PC-3 (cell line): ENCODE measurements at regions of chr10 and their contacts with region 1.

Region 1: GRCh38 chr10:70815504-70816219 is at the start of gene SGPL1:
- DNase-seq: peak; percentile 98
- ATAC-seq: peak; percentile 63
- H3K4me3 ChIP-seq: peak within 1 kb of the TSS; percentile 89
- H3K27ac ChIP-seq: peak within 1 kb of the TSS; percentile 82
- H3K4me1 ChIP-seq: peaks cover 21% of the 10 kb centered on the region
- H3K27me3 ChIP-seq: no peaks in the 10 kb centered on the region
- CTCF ChIP-seq: peak; percentile 98
- total RNA-seq, gene SGPL1: 77.6 and 101 TPM in 2 replicates

Region 2: GRCh38 chr10:70549962-70550458 is 265.7 kb before region 1 on chr10:
- CTCF ChIA-PET with region 1: no interaction called
- POLR2A ChIA-PET with region 1: no interaction called
- intact Hi-C with region 1: loop called (anchors 1 kb)
- DNase-seq: peak; percentile 91
- ATAC-seq: peak; percentile 95
- H3K4me3 ChIP-seq: no peak overlapping the region
- H3K27ac ChIP-seq: no peak overlapping the region
- H3K4me1 ChIP-seq: no peaks in the 10 kb centered on the region
- H3K27me3 ChIP-seq: no peaks in the 10 kb centered on the region
- CTCF ChIP-seq: peak; percentile 99

Region 3: GRCh38 chr10:70827086-70827757 is 11.6 kb after region 1 on chr10:
- CTCF ChIA-PET with region 1: interaction called, 4 read pairs
- POLR2A ChIA-PET with region 1: no interaction called
- intact Hi-C with region 1: loop called (anchors 1 kb)
- DNase-seq: peak; percentile 96
- ATAC-seq: peak; percentile 70
- H3K4me3 ChIP-seq: peak overlapping the region; percentile 29
- H3K27ac ChIP-seq: peak overlapping the region; percentile 84
- H3K4me1 ChIP-seq: peaks cover 67% of the 10 kb centered on the region
- H3K27me3 ChIP-seq: no peaks in the 10 kb centered on the region
- CTCF ChIP-seq: no peak

Region 4: DNA sequence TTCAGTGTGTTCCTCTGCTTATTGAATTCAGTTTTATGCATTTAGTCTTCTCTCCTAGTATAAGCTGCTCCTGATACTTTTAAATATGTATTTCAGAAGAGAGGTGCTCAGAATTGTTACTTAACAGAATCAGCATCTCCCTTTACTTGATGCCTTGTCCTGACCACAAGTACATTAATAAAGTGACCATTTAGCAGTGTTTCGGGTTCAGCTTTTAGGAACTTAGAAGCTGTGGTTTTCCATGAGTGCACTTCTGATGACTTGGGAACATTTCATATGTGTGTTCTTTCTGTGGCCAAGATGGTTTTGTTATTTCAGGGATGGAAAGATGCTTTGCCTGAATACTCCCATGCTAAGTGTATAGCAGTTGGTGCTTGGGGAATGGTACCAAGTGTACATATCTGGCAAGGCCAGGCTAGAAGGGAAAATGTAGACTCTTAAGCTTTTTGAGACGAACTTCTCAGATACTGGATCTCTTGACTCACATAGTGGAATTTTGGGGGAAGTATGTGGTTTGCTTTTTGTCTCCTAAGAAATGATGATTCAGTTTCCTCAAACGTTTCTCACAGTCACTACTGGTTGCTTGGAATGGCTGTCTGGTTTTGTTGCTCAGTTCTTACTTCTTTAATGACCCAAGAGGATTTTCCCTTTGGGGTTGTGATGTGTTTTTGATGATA is 17.3 kb after region 1 on chr10:
- CTCF ChIA-PET with region 1: interaction called, 3 read pairs
- POLR2A ChIA-PET with region 1: no interaction called
- intact Hi-C with region 1: loop called (anchors 2 kb)
- DNase-seq: peak; percentile 97
- ATAC-seq: peak; percentile 71
- H3K4me3 ChIP-seq: peak overlapping the region; percentile 17; the same call in 1 of the 2 replicates
- H3K27ac ChIP-seq: peak overlapping the region; percentile 84
- H3K4me1 ChIP-seq: peaks cover 65% of the 10 kb centered on the region
- H3K27me3 ChIP-seq: no peaks in the 10 kb centered on the region
- CTCF ChIP-seq: no peak

Region 5: DNA sequence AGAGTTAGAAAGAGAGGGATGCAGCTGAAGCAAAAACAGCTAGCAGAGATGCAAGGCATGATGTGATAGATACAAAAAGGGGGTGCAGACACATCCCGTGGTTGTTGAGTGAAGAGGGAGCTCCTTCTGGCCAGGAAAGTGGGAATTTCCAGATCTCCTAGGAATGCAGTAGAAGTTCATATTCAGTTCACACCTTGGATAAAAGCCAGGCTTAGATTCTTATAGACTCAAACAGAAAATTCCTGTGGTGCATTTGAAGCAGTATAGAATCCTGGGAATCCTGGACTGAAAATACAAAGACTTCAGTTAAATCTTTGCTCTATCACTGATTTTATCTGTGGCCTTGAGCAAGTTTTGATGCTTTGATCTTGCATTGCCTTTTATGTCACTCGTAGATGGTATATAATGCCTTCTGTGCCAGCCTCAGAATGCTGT is 33.9 kb after region 1 on chr10:
- CTCF ChIA-PET with region 1: interaction called, 13 read pairs
- POLR2A ChIA-PET with region 1: interaction called, 4 read pairs
- intact Hi-C with region 1: loop called (anchors 2 kb)
- DNase-seq: peak; percentile 76
- ATAC-seq: peak; percentile 19; the same call in 1 of the 2 replicates
- H3K4me3 ChIP-seq: no peak overlapping the region
- H3K27ac ChIP-seq: no peak overlapping the region
- H3K4me1 ChIP-seq: peaks cover 33% of the 10 kb centered on the region
- H3K27me3 ChIP-seq: no peaks in the 10 kb centered on the region
- CTCF ChIP-seq: no peak

Region 6: GRCh38 chr10:70866424-70866823 is 50.8 kb after region 1 on chr10:
- CTCF ChIA-PET with region 1: no interaction called
- POLR2A ChIA-PET with region 1: no interaction called
- intact Hi-C with region 1: loop called (anchors 1 kb)
- DNase-seq: peak; percentile 89
- ATAC-seq: peak; percentile 63
- H3K4me3 ChIP-seq: peak overlapping the region; percentile 51
- H3K27ac ChIP-seq: peak overlapping the region; percentile 89
- H3K4me1 ChIP-seq: peaks cover 35% of the 10 kb centered on the region
- H3K27me3 ChIP-seq: no peaks in the 10 kb centered on the region
- CTCF ChIP-seq: no peak